Panc1 (cell line): ENCODE measurements at regions of chr16 and their contacts with region 1.

Region 1: DNA sequence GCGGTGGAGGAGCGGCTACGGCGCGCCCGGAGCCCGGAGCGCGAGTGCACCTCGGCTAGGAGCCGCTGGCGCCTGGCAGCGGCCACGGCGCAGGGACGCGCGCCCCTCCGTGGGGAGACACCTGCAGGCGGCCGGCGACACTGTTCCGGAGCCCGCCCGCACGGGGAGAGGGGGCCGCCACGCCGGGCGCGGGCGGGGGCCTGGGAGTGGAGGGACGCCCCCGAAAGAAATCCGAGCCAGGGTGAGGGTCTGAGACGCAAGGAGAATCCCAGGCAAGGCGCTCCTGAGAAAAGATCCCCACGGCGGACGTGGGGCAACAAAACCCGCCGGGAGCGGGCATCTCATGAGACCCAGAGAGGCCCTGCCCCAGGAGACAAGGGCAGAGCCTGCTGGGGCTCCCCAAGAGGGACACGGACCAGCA is at the start of gene GSG1L:
- DNase-seq: no peak
- ATAC-seq: peak; percentile 69
- H3K4me3 ChIP-seq: peak within 1 kb of the TSS in 1 of 2 experiments; percentile 14; a peak in 2 of 4 replicates
- H3K27ac ChIP-seq: no peak within 1 kb of the TSS
- H3K4me1 ChIP-seq: no peaks in the 10 kb centered on the region
- H3K27me3 ChIP-seq: peaks cover 25% of the 10 kb centered on the region
- CTCF ChIP-seq: peak; percentile 35; the same call in 1 of the 2 replicates
- total RNA-seq, gene GSG1L: 0.08 TPM

Region 2: DNA sequence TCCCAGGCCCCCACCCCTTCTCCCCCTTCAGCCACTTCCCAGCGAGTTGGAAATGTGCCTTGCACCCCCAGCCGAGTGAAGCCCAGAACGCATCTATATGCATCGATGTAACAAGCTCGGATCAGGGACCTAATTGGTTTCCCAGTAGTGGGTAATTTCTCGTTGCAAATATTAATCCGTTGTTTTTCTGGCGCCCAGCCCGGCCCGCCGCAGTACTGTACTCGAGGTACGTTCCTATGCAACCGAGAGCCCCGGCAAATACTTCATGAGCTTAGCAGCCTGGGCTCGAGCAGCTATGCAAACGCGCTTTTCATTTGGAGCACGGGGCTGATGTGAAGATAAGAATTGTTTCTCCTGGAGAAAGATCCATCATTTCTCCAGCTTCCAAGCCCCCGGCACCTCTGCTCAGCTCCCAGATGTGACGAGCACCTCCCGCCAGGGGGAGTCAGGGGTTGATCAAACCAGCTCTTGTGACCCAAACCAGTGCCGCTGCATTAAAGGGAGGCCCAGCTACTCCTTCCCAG is 283.9 kb before region 1 on chr16:
- CTCF ChIA-PET with region 1: no interaction called
- POLR2A ChIA-PET with region 1: no interaction called
- in situ Hi-C with region 1: no loop called
- intact Hi-C with region 1: loop called (anchors 5 kb)
- DNase-seq: no peak
- ATAC-seq: peak; percentile 70
- H3K4me3 ChIP-seq: no peak overlapping the region
- H3K27ac ChIP-seq: no peak overlapping the region
- H3K4me1 ChIP-seq: no peaks in the 10 kb centered on the region
- H3K27me3 ChIP-seq: no peaks in the 10 kb centered on the region
- CTCF ChIP-seq: peak; percentile 79; the same call in 1 of the 2 replicates

Region 3: DNA sequence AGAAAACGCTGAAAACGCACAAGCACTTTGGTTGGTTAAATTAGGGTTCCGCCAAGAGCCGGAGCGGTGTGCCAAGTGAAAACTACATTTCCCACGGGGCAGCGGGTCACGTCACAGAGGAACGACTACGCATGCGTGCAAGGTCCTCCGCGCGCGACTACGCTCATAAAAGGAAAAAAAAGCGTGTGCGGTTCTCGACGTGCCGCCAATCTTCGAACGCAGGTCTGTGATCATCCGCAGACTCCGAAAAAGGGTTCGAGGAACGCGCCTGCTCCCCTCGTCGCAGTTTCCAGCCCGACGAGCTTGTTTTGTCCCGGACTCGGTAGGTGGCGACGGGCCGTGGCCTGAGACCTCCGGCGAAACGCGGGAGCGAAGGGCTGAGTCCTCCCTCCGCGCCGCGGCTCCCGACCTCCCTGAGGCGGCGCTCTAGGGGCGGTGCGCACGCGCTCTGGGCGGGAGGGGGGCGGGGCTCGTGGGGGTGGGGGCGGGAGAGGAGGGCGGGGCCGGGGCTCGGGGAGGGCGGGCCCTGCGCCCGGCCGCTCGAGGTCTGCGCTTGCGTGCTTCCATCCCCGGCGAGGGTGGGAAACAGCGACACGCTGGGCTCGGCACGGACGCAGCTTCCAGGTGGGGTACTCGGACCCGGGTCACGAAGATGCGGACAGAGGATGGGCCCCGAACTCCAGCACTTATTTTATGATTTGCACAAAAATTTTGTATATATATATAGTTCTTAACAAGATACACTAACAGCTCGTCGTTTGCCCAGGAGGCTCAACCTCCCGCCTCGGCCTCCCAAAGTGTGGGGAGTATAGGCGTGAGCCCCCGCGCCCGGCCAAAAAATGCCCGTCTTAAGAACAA is 490.4 kb after region 1 on chr16 and contains the start of gene SGF29:
- CTCF ChIA-PET with region 1: no interaction called
- POLR2A ChIA-PET with region 1: no interaction called
- in situ Hi-C with region 1: no loop called
- intact Hi-C with region 1: no loop called
- DNase-seq: peak; percentile 85
- ATAC-seq: peak; percentile 94
- H3K4me3 ChIP-seq: peak within 1 kb of the TSS; percentile 63 to 85
- H3K27ac ChIP-seq: peak within 1 kb of the TSS; percentile 92
- H3K4me1 ChIP-seq: peaks cover 6% of the 10 kb centered on the region
- H3K27me3 ChIP-seq: no peaks in the 10 kb centered on the region
- CTCF ChIP-seq: peak; percentile 68; the same call in 1 of the 2 replicates
- total RNA-seq, gene SGF29: 29.5 TPM